Activated B cell treated with CpG ODN at 0.5 μM for 24 hours (primary cell): ENCODE measurements at regions of chr19 and their contacts with region 1.

Region 1: GRCh38 chr19:35899547-35900214 is 659 bp downstream of the NFKBID start:
- DNase-seq: peak; percentile 93
- ATAC-seq: peak; percentile 57
- H3K4me3 Mint-ChIP-seq: peak overlapping the region; percentile 95
- H3K27ac Mint-ChIP-seq: peak overlapping the region; percentile 95
- H3K4me1 Mint-ChIP-seq: peaks cover 77% of the 10 kb centered on the region
- H3K27me3 Mint-ChIP-seq: no peaks in the 10 kb centered on the region
- CTCF ChIP-seq: no peak

Region 2: DNA sequence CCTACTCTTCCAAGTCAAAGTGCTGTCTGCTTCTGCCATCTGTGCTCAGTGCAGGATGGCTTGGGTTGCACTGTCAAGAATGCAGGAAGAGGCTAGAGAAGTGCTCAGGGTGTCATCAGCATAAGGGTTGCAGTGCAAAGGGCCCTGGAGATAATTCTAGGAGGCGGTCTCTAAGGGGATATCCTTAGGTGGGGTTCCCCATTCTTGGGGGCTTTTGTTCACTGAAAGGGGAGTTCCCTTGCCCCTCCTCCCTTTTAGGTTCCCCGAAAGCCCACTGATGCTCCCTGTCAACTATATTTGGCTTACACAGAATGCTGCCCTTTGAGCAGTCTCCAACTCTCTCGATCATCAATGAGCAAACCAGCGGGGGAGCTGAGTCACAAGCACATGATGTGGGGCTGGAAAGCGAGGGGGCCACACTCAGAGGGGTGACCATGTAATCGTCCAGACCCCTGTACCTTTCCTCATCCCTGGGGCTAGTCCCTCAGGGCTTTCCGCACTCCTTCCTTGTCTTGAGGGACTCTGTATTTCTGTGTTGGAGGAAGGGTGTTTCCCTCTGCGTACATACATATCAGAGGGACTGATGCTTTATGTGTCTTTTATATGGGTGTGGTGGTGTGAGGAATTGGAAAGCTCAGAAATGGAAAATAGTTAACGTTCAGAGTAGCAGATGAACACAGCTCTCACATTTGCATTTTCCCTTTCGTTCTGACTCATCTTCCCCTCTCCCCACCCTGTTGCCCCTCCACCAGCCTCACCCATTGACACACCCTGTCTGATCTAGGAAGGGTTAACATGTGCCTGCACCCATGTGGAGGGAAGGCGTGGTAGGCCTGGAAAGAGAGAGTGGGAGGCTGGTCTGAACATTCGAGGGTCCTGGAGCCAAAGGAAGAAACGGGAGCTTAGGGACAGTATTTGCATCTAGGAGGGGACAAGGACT is 188.6 kb before region 1 on chr19:
- CTCF ChIA-PET with region 1: no interaction called
- POLR2A ChIA-PET with region 1: interaction called, 6 read pairs
- intact Hi-C with region 1: loop called (anchors 1 kb)
- DNase-seq: peak; percentile 53
- ATAC-seq: peak; percentile 56
- H3K4me3 Mint-ChIP-seq: peak overlapping the region; percentile 62
- H3K27ac Mint-ChIP-seq: peak overlapping the region; percentile 96
- H3K4me1 Mint-ChIP-seq: peaks cover 59% of the 10 kb centered on the region
- H3K27me3 Mint-ChIP-seq: no peaks in the 10 kb centered on the region
- CTCF ChIP-seq: no peak

Region 3: DNA sequence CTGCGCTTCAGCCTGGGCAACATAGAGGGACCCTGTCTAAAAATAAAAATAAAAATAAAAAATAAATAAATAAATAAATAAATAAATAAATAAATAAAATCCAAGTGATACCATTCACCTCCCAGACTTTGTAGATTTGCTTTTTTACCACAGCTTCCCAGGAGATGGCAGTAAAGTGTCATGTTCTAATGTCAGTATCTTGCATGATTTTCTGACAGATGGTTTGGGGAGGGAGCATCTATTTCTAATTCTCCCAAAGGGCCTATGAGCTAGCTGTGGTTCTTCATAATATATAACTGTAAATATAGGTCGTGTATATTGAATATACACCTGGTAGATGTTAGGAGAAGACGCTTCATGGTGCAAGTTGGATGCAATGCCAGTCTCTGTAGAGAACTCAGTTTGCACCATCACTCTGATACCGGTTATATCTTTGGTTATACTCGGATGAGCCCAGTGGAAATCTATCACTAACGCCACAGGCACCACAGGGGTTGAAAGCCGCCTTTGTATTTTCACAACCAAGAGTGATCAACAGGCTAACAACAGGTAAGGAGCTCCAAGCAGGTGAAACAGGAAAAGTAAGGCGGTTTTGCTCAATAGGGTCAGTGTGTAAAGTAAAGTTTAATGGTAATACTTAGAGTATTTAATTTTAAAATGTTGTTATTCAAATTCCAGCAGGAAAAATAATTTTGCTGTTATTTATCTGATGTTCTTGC is 17.4 kb before region 1 on chr19:
- CTCF ChIA-PET with region 1: no interaction called
- POLR2A ChIA-PET with region 1: interaction called, 6 read pairs
- intact Hi-C with region 1: loop called (anchors 1 kb)
- DNase-seq: no peak
- ATAC-seq: peak; percentile 69
- H3K4me3 Mint-ChIP-seq: no peak overlapping the region
- H3K27ac Mint-ChIP-seq: peak overlapping the region; percentile 38
- H3K4me1 Mint-ChIP-seq: peaks cover 6% of the 10 kb centered on the region
- H3K27me3 Mint-ChIP-seq: peaks cover 20% of the 10 kb centered on the region
- CTCF ChIP-seq: no peak

Region 4: GRCh38 chr19:35949131-35949530 is 49.5 kb after region 1 on chr19:
- CTCF ChIA-PET with region 1: no interaction called
- POLR2A ChIA-PET with region 1: no interaction called
- intact Hi-C with region 1: no loop called
- DNase-seq: no peak
- ATAC-seq: no peak
- H3K4me3 Mint-ChIP-seq: no peak overlapping the region
- H3K27ac Mint-ChIP-seq: no peak overlapping the region
- H3K4me1 Mint-ChIP-seq: peaks cover 15% of the 10 kb centered on the region
- H3K27me3 Mint-ChIP-seq: peaks cover 4% of the 10 kb centered on the region
- CTCF ChIP-seq: no peak

Region 5: GRCh38 chr19:36139473-36140303 is 240.0 kb after region 1 on chr19 and contains the start of gene CAPNS1:
- CTCF ChIA-PET with region 1: no interaction called
- POLR2A ChIA-PET with region 1: no interaction called
- intact Hi-C with region 1: loop called (anchors 2 kb)
- DNase-seq: peak; percentile 93
- ATAC-seq: peak; percentile 76
- H3K4me3 Mint-ChIP-seq: peak within 1 kb of the TSS; percentile 97
- H3K27ac Mint-ChIP-seq: peak within 1 kb of the TSS; percentile 97
- H3K4me1 Mint-ChIP-seq: peaks cover 16% of the 10 kb centered on the region
- H3K27me3 Mint-ChIP-seq: peaks cover 2% of the 10 kb centered on the region
- CTCF ChIP-seq: no peak
- total RNA-seq, gene CAPNS1: 442 and 477 TPM in 2 replicates